ENCODE measurements at regions of chr5 and their contacts with region 1.

Region 1: DNA sequence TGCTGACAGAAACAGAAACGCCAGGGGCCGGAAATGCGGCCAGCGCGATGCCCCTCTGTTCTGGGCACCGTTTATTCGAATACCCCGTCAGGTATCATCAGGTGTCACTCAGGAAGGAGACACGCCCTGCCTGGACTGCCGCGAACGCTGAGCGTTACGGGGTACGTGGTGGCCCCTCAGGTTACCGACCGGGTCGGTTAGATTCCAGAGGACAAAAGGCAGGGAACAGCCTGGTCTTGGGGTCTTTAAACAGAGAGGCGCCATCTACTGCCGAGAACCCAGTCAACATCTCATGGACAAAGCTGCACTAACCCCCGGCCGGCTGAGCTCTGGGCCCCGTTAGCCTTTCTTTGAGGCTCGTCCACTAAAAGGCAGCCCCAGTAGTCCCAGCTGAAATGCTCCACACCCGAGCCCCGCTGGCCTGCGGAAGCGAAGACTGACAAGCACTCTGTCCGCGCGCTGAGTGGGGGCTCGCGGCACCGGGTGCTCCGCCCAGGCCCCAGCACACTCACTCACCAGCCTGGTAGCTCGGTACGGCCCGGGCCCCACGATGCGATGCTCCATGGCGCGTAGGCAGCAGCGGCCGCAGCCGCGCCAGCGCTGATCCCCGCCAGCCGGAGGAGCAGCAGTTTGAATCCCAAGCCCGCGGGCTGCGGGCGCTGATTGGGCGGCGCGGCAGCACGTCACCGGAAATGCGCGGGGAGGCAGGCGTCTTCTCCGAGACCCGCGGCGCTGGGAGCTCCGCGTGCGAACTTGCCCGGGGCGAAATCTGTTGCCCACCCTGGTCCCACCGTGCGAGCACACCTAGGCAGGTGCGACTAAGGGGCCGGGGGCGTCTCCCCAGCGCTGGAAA is at the start of gene DEPDC1B:
- DNase-seq: peak; percentile 88
- H3K4me3 Mint-ChIP-seq: peak within 1 kb of the TSS; percentile 92
- H3K27ac Mint-ChIP-seq: peak within 1 kb of the TSS; percentile 94
- H3K4me1 Mint-ChIP-seq: peaks cover 37% of the 10 kb centered on the region
- H3K27me3 Mint-ChIP-seq: peaks cover 22% of the 10 kb centered on the region
- total RNA-seq, gene DEPDC1B: 46.7 to 51.1 TPM

Region 2: GRCh38 chr5:60687927-60688720 is 11.6 kb before region 1 on chr5:
- CTCF ChIA-PET with region 1: interaction called, 11 read pairs
- POLR2A ChIA-PET with region 1: no interaction called
- DNase-seq: no peak
- H3K4me3 Mint-ChIP-seq: no peak overlapping the region
- H3K27ac Mint-ChIP-seq: no peak overlapping the region
- H3K4me1 Mint-ChIP-seq: peaks cover 14% of the 10 kb centered on the region
- H3K27me3 Mint-ChIP-seq: no peaks in the 10 kb centered on the region

Measured in activated CD4-positive, alpha-beta T cell treated with anti-CD3 and anti-CD28 coated beads, Interleukin-2, amount 10 ng/mL, durations not matched to agents 7 days and 5 days (primary cell).